ENCODE measurements at regions of chr6 and their contacts with region 1.

Region 1: DNA sequence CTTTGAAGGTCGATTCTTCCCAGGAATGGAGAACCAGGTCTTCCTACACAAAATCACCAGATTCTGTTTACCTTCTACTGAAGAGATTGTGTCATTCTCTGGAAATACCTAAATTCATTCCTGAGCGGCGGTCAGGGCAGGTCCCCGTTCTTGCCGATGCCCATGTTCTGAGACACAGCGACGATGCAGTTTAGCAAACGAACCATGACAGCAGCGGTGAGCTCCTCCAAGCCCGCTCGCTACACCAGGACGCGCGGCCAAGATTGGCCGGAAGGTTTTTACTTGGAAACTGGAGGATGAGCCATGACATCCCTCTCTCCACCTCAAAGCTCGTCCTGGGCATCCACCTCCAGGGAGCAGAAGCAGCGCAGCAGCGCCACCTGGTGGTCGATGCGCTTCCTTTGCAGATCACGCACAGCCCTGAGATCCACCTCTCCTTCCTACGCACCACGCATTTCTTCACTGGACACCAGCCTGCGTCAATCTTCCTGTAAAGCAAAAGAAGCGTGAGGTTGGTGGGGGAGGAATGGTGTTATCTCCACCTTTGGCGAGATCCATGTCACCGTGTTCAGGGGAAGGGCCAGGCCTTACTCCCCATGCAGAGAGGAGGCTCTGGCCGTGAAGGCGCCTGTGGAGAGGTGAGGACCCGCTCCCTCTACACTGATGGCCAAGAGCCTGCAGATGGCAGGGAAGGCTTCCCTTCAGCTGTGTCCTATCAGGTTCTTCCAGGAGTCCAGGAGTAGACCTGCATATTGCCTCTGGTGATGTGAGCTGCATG is 9.9 kb upstream of the HLA-B start:
- DNase-seq: peak; percentile 82
- H3K4me3 Mint-ChIP-seq: peak overlapping the region; percentile 63
- H3K27ac Mint-ChIP-seq: no peak overlapping the region
- H3K4me1 Mint-ChIP-seq: peaks cover 12% of the 10 kb centered on the region
- H3K27me3 Mint-ChIP-seq: peaks cover 60% of the 10 kb centered on the region

Region 2: DNA sequence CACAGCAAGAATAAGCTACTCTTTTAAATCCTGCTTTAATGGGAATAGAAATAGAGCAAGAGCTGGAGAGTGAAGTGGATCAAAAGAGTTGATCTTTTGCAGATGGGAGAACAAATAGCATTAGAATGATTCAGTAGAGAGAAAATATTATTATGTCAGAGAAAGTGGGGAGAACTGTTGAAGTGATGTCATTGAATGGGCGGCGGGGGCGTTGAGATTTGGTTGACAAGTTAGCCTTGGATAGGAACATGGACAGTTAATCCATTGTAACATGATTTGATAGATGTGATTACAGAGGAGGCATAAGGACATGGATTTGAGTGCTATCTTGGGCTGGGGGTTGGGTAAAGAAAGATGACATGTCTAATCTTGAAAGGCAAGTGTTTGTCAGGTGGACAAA is 731.0 kb before region 1 on chr6:
- CTCF ChIA-PET with region 1: no interaction called
- POLR2A ChIA-PET with region 1: no interaction called
- DNase-seq: no peak
- H3K4me3 Mint-ChIP-seq: no peak overlapping the region
- H3K27ac Mint-ChIP-seq: no peak overlapping the region
- H3K4me1 Mint-ChIP-seq: peaks cover 8% of the 10 kb centered on the region
- H3K27me3 Mint-ChIP-seq: no peaks in the 10 kb centered on the region

Region 3: GRCh38 chr6:30942338-30943060 is 424.4 kb before region 1 on chr6:
- CTCF ChIA-PET with region 1: no interaction called
- POLR2A ChIA-PET with region 1: no interaction called
- DNase-seq: no peak
- H3K4me3 Mint-ChIP-seq: no peak overlapping the region
- H3K27ac Mint-ChIP-seq: no peak overlapping the region
- H3K4me1 Mint-ChIP-seq: peaks cover 2% of the 10 kb centered on the region
- H3K27me3 Mint-ChIP-seq: peaks cover 39% of the 10 kb centered on the region

Region 4: DNA sequence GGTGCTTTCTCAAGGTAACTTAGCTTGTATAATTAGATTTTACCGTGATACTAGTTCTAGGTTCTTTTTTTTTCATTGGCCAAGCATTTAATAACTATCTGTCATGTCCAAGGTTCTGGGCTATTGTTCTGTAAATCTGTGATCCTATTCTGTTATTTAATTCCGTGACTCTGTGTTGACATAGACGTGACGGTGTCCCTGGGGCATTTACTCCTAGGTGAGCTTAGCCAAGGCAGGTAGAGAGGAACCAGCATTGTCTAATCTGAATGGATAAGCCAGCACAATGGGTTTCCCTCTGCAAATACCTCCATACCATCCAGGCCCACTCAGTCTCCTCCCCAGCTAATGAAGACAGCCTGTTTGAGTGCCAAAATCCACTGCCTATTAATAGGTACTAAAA is 237.8 kb before region 1 on chr6:
- CTCF ChIA-PET with region 1: interaction called, 14 read pairs
- POLR2A ChIA-PET with region 1: no interaction called
- DNase-seq: no peak
- H3K4me3 Mint-ChIP-seq: no peak overlapping the region
- H3K27ac Mint-ChIP-seq: no peak overlapping the region
- H3K4me1 Mint-ChIP-seq: no peaks in the 10 kb centered on the region
- H3K27me3 Mint-ChIP-seq: peaks cover 13% of the 10 kb centered on the region

Region 5: DNA sequence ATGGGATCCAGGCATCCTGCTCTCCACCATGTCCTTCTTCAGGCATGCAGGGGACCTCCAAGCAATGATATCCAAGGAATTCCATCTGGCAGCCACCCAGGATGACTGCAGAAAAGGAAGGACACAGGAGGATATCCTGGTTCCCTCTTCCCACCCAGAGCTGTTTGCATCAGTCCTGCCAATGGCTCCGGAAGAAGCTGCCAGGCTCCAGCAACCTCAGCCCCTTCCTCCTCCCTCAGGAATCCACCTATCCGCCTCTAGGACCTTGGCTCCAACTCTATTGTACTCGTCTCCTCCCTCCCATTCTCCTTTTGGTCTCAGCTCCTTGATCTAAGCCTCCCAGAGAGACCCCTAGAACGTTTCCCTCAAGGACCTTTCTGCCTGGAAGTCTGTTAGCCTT is 227.3 kb before region 1 on chr6:
- CTCF ChIA-PET with region 1: interaction called, 14 read pairs
- POLR2A ChIA-PET with region 1: no interaction called
- DNase-seq: no peak
- H3K4me3 Mint-ChIP-seq: no peak overlapping the region
- H3K27ac Mint-ChIP-seq: no peak overlapping the region
- H3K4me1 Mint-ChIP-seq: peaks cover 6% of the 10 kb centered on the region
- H3K27me3 Mint-ChIP-seq: no peaks in the 10 kb centered on the region

Region 6: DNA sequence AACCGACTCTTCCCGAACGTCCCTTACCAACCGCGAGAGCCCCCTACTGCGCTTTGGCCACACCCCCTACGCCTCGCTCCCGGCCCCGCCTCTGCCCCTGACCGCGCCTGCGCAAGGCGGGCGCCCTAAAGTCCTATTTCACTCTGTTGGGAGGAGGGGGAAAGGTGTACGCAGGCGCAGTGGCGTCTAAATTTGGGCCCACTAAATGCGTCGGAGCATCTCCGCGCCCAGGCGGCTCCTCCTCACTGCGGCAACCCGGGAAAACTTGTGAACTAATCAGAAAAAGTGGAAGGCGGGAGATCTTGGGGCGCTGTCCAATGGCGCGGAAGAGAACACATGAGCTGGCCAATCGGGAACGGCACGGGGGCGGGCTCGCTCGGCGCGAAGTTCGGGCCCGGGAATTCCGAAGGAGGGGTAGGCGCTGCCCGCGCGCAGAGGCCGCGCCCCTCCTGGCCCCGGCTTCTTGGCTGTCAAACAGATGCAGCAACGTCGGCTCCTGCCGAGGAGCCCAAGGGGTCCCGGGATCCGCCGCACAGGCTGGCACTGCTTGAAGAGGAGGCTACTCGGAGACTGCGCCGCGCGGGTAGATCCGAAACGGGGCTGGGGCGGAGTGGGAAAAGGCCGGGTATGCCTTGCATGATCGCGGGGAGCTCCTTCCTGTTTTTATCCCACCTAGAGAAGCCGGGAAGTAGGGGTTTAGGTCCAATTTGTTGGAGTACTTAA is 208.6 kb before region 1 on chr6 and contains the start of gene TCF19:
- CTCF ChIA-PET with region 1: interaction called, 20 read pairs
- POLR2A ChIA-PET with region 1: no interaction called
- DNase-seq: peak; percentile 99
- H3K4me3 Mint-ChIP-seq: peak within 1 kb of the TSS; percentile 87
- H3K27ac Mint-ChIP-seq: peak within 1 kb of the TSS; percentile 84
- H3K4me1 Mint-ChIP-seq: peaks cover 46% of the 10 kb centered on the region
- H3K27me3 Mint-ChIP-seq: no peaks in the 10 kb centered on the region
- total RNA-seq, gene TCF19: 86.3 to 86.7 TPM

Region 7: GRCh38 chr6:31197559-31198305 is 169.2 kb before region 1 on chr6:
- CTCF ChIA-PET with region 1: interaction called, 73 read pairs
- POLR2A ChIA-PET with region 1: interaction called, 5 read pairs
- DNase-seq: peak; percentile 98
- H3K4me3 Mint-ChIP-seq: peak overlapping the region; percentile 98
- H3K27ac Mint-ChIP-seq: peak overlapping the region; percentile 99
- H3K4me1 Mint-ChIP-seq: peaks cover 65% of the 10 kb centered on the region
- H3K27me3 Mint-ChIP-seq: no peaks in the 10 kb centered on the region

Region 8: DNA sequence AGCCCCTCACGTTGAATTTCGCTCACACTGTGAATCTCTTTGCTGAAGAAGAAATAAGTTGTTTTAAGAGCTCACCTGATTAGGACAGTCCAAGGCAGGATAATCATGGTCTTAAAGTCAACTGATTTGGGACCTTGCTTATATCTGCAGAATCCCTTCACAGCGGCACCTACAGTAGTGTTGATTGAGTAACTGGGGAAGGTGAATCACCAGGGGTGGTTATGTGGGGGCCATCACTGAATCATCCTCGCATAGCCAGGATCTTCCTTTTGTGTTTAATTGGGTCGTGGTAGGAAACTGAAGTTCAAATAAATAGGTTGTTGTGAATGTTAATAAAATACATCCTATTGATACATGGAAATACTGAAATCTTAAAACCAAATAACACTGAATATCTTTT is 16.3 kb after region 1 on chr6:
- CTCF ChIA-PET with region 1: interaction called, 17 read pairs
- POLR2A ChIA-PET with region 1: no interaction called
- DNase-seq: no peak
- H3K4me3 Mint-ChIP-seq: no peak overlapping the region
- H3K27ac Mint-ChIP-seq: no peak overlapping the region
- H3K4me1 Mint-ChIP-seq: no peaks in the 10 kb centered on the region
- H3K27me3 Mint-ChIP-seq: peaks cover 21% of the 10 kb centered on the region